ENCODE measurements at regions of chr3 and their contacts with region 1.

Region 1: DNA sequence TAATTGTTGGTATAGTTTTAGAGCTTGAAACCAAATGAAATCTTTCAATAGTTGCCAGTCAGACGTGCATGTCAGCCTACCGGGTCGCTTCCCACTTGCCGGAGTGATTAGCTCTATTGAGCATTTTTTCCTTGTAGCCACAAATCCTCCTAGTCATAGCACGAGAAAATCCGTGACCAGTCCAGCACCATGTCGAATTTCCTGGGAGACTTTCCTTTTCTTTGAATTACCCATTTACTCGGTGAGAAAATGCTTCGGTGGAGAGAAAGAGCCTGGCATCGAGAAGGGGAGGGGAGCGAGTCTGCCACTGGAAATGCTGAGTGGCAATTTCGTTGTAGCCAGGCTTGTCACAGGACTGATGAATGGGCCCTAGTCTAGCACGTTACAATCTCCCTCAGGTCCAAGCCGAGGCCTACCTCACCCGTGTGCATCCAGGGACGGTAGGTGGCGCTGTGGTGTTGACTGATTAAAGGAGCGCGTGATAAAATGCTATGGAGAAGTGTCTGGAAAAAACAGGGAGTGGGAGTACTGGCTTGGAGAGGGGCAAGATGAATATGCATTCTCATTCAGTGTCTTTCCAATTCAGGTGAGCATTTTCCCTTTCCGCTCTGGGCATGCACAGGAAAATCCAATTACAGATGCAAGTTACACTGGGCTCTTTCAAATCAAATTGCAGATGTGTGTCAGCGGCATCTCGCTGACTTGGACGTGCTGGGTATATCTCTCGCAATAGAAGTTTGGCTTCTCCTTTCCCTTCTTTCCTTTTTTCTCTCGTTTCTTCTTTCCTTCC is 238.8 kb downstream of the EDEM1 start:
- DNase-seq: peak; percentile 77
- H3K4me3 Mint-ChIP-seq: no peak overlapping the region
- H3K27ac Mint-ChIP-seq: no peak overlapping the region
- H3K4me1 Mint-ChIP-seq: peaks cover 16% of the 10 kb centered on the region
- H3K27me3 Mint-ChIP-seq: peaks cover 11% of the 10 kb centered on the region
- CTCF ChIP-seq: peak; percentile 88

Region 2: DNA sequence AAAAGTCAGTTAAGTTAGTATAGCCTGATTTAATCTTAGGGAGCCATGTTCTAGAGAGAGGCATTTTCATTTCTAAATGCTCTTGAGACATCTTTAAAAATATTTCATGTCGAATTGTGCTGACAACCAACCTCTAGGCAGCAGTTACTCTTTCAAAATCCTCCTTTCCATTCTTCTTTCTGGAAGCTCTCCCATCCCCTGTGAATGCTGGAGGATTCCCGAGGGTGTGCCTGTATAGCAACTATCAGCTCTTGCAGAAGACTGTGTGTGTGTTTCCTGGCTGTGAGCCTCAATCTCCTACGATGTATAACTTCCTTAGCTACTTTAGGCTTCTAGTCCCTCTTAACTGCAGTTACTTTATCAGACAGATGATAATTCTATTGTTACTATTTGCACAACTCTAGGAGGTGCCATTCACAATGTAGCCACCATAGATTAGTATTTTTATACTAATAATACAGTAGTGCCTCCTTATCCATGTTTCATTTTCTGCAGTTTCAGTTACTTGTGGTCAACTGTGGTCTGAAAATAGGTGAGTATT is 11.6 kb after region 1 on chr3:
- CTCF ChIA-PET with region 1: interaction called, 13 read pairs
- POLR2A ChIA-PET with region 1: interaction called, 3 read pairs
- intact Hi-C with region 1: no loop called
- DNase-seq: no peak
- H3K4me3 Mint-ChIP-seq: no peak overlapping the region
- H3K27ac Mint-ChIP-seq: no peak overlapping the region
- H3K4me1 Mint-ChIP-seq: no peaks in the 10 kb centered on the region
- H3K27me3 Mint-ChIP-seq: no peaks in the 10 kb centered on the region
- CTCF ChIP-seq: no peak

Region 3: GRCh38 chr3:5787861-5788488 is 361.7 kb after region 1 on chr3:
- CTCF ChIA-PET with region 1: interaction called, 6 read pairs
- POLR2A ChIA-PET with region 1: no interaction called
- intact Hi-C with region 1: loop called (anchors 5 kb)
- DNase-seq: peak; percentile 16
- H3K4me3 Mint-ChIP-seq: no peak overlapping the region
- H3K27ac Mint-ChIP-seq: no peak overlapping the region
- H3K4me1 Mint-ChIP-seq: no peaks in the 10 kb centered on the region
- H3K27me3 Mint-ChIP-seq: no peaks in the 10 kb centered on the region
- CTCF ChIP-seq: peak; percentile 40

Measured in MCF 10A (cell line).